ENCODE measurements at regions of chr6 and their contacts with region 1.

Region 1: DNA sequence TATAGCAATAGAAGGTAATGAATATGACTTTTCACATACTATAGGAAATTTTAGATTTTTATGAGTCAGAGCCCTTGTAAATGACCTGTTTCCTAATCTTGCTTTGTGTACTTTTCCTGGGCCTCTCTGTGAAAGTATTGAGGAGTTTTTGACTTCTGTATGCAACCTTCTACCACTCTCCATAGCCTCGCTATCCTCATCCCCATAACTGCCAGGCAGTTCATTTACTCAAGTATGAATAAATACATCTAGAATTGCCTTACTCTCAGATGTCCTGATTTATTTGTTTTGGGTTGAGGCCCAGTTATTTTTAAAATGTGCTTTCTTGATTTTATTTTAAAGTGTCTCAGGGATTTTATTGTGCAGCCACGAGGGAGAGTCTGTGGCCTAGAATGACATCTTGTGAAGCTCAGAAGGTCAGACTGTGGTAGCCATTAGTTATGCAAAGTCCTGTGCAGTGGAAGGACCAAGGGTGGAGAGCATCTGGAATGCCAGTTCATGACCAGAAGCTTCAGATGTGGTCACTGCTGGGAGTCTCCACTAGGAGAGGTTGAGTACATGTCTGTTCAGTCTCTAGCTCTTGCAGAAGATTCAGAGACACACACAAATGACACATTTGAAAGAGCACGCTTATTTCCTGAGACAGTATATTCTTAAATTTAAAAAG is 346.2 kb upstream of the IMPG1 start:
- DNase-seq: no peak
- ATAC-seq: no peak
- H3K4me3 ChIP-seq: no peak overlapping the region
- H3K27ac ChIP-seq: no peak overlapping the region
- H3K4me1 ChIP-seq: no peaks in the 10 kb centered on the region
- H3K27me3 ChIP-seq: no peaks in the 10 kb centered on the region
- CTCF ChIP-seq: no peak

Region 2: GRCh38 chr6:75864446-75864845 is 554.2 kb before region 1 on chr6:
- CTCF ChIA-PET with region 1: interaction called, 14 read pairs
- POLR2A ChIA-PET with region 1: no interaction called
- intact Hi-C with region 1: no loop called
- DNase-seq: no peak
- ATAC-seq: no peak
- H3K4me3 ChIP-seq: no peak overlapping the region
- H3K27ac ChIP-seq: no peak overlapping the region
- H3K4me1 ChIP-seq: no peaks in the 10 kb centered on the region
- H3K27me3 ChIP-seq: no peaks in the 10 kb centered on the region
- CTCF ChIP-seq: no peak

Region 3: GRCh38 chr6:76342611-76343160 is 76.0 kb before region 1 on chr6:
- CTCF ChIA-PET with region 1: no interaction called
- POLR2A ChIA-PET with region 1: no interaction called
- intact Hi-C with region 1: no loop called
- DNase-seq: no peak
- ATAC-seq: no peak
- H3K4me3 ChIP-seq: no peak overlapping the region
- H3K27ac ChIP-seq: no peak overlapping the region
- H3K4me1 ChIP-seq: no peaks in the 10 kb centered on the region
- H3K27me3 ChIP-seq: no peaks in the 10 kb centered on the region
- CTCF ChIP-seq: no peak

Measured in PC-3 (cell line).